ENCODE measurements at regions of chr12 and their contacts with region 1.

Region 1: DNA sequence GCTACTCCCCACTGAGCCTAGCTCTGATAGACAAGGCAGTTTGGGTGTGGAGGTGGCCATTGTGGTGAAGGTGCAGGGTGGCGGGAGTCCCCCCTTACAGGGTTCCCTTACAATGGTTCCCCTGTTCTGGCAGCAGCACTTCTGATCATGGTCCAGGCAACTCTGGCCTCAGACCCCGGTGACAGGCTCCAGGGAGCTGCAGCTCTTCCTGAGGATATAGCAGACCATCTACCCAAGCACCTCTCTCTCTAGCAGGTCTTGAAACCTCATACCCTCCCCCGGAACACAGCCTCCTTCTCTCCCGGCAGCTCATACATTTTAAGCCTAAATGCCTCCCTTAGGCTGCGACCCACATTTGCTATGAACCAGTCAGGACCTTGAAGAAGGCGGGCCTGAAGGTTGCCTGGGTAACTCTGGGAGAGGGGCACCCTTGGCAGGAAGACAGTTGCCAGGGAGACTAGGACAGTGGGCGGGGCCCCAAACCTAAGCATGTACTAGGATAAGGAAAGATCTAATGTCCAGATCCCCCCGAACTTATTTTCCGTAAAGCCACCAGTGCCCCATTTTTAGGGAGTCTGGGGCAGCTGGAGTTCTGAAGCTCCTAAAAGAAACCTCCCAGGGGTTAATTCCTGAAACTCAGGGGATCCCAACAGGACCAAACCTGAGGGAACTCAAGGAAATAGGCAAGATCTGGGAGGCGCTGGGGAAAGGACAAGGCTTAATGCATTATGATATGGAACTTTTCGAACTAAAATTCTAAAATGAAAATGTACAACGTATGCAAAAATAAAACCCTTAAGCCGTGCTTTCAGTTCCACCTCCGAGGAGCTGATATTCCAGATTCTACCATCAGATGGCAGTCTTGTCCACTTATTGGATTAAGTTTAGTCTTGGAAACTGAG is 4.5 kb upstream of the GDF11 start:
- DNase-seq: peak; percentile 57 to 85 (median 58)
- ATAC-seq: peak; percentile 74
- H3K4me3 ChIP-seq: peak overlapping the region; percentile 35
- H3K27ac ChIP-seq: peak overlapping the region; percentile 27
- H3K4me1 ChIP-seq: peaks cover 21 to 24% of the 10 kb centered on the region in 2 experiments
- H3K27me3 ChIP-seq: no peaks in the 10 kb centered on the region
- CTCF ChIP-seq: peak; percentile 66 to 91 (median 85)
- EP300 ChIP-seq: no peak
- POLR2A ChIP-seq: no peak
- RAD21 ChIP-seq: peak; percentile 94

Region 2: GRCh38 chr12:55188974-55189556 is 549.3 kb before region 1 on chr12:
- CTCF ChIA-PET with region 1: interaction called, 5 read pairs
- POLR2A ChIA-PET with region 1: no interaction called
- in situ Hi-C with region 1: no loop called
- intact Hi-C with region 1: loop called (anchors 5 kb)
- DNase-seq: peak; percentile 55 to 86 (median 62)
- ATAC-seq: peak; percentile 93
- H3K4me3 ChIP-seq: no peak overlapping the region
- H3K27ac ChIP-seq: no peak overlapping the region
- H3K4me1 ChIP-seq: no peaks in the 10 kb centered on the region
- H3K27me3 ChIP-seq: no peaks in the 10 kb centered on the region; a peak in 1 of 5 replicates
- CTCF ChIP-seq: peak; percentile 50 to 87 (median 58); a peak in 5 of 6 replicates
- EP300 ChIP-seq: no peak
- POLR2A ChIP-seq: no peak
- RAD21 ChIP-seq: peak; percentile 96 to 97

Region 3: GRCh38 chr12:55554296-55554695 is 184.1 kb before region 1 on chr12:
- CTCF ChIA-PET with region 1: no interaction called
- POLR2A ChIA-PET with region 1: no interaction called
- in situ Hi-C with region 1: no loop called
- intact Hi-C with region 1: no loop called
- DNase-seq: no peak
- ATAC-seq: no peak
- H3K4me3 ChIP-seq: no peak overlapping the region
- H3K27ac ChIP-seq: no peak overlapping the region
- H3K4me1 ChIP-seq: no peaks in the 10 kb centered on the region
- H3K27me3 ChIP-seq: no peaks in the 10 kb centered on the region
- CTCF ChIP-seq: no peak
- EP300 ChIP-seq: no peak
- POLR2A ChIP-seq: no peak
- RAD21 ChIP-seq: no peak

Region 4: DNA sequence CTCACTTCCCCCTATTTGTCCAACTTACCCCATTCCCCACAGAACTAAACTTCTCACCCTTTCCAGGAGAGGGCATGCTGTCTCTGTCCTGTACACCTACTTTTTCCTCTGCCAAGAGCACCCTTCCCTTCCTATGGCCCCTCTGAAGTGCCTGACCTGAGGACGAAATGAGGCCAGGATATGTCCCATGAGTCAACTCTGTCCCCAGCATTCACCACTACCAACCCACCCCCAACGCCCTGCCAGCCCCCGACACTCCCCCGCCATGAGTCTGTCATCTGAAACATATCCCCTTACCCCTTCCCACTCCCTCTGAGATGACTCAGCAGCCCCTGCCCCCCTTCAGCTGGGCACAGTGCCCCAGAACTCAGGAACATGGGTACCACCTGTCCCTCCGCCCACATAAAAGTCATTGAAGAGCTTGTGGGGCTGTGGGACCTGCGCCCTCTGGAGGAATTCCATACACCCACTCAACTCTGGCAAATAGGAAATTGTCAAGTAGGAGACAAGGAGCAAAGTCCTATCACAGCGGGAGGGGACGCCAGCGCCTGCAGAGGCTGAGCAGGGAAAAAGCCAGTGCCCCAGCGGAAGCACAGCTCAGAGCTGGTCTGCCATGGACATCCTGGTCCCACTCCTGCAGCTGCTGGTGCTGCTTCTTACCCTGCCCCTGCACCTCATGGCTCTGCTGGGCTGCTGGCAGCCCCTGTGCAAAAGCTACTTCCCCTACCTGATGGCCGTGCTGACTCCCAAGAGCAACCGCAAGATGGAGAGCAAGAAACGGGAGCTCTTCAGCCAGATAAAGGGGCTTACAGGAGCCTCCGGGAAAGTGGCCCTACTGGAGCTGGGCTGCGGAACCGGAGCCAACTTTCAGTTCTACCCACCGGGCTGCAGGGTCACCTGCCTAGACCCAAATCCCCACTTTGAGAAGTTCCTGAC is 57.0 kb before region 1 on chr12:
- CTCF ChIA-PET with region 1: interaction called, 3 read pairs
- POLR2A ChIA-PET with region 1: no interaction called
- in situ Hi-C with region 1: no loop called
- intact Hi-C with region 1: loop called (anchors 1 kb)
- DNase-seq: peak in 3 of 4 experiments; percentile 20 to 71 (median 56)
- ATAC-seq: peak; percentile 84
- H3K4me3 ChIP-seq: peak overlapping the region; percentile 29
- H3K27ac ChIP-seq: no peak overlapping the region; the same call in 2 of the 3 replicates
- H3K4me1 ChIP-seq: peaks cover 0 to 11% of the 10 kb centered on the region in 2 experiments; a peak in 2 of 5 replicates
- H3K27me3 ChIP-seq: peaks cover 29 to 50% of the 10 kb centered on the region in 2 experiments
- CTCF ChIP-seq: peak; percentile 55 to 80 (median 64)
- EP300 ChIP-seq: no peak
- POLR2A ChIP-seq: no peak
- RAD21 ChIP-seq: peak in 1 of 2 experiments; percentile 22; a peak in 3 of 4 replicates

Region 5: DNA sequence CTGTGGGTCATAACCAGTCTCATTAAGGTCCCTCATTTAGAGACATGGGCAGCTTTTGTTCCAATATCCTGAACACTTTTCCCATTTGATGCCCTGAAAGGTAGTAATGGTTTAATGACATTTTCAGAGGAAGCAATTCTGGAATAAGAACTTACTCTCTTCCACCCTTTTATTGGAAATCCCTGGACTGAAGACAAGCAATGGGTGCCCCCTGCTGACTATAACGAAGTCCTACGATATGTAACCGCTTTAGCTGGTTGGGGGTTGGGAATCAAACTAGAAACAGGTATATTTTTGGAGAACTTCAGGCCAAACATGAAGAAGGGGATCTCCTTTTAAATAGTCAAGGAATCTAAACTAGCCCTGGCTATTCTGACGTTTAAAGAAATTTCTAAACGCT is 58.7 kb after region 1 on chr12:
- CTCF ChIA-PET with region 1: interaction called, 14 read pairs
- POLR2A ChIA-PET with region 1: no interaction called
- in situ Hi-C with region 1: no loop called
- intact Hi-C with region 1: loop called (anchors 1 kb)
- DNase-seq: peak; percentile 31 to 61 (median 48)
- ATAC-seq: peak; percentile 90
- H3K4me3 ChIP-seq: no peak overlapping the region
- H3K27ac ChIP-seq: no peak overlapping the region
- H3K4me1 ChIP-seq: no peaks in the 10 kb centered on the region
- H3K27me3 ChIP-seq: no peaks in the 10 kb centered on the region
- CTCF ChIP-seq: peak; percentile 48 to 71 (median 54)
- EP300 ChIP-seq: no peak
- POLR2A ChIP-seq: no peak
- RAD21 ChIP-seq: peak; percentile 59 to 66

Region 6: DNA sequence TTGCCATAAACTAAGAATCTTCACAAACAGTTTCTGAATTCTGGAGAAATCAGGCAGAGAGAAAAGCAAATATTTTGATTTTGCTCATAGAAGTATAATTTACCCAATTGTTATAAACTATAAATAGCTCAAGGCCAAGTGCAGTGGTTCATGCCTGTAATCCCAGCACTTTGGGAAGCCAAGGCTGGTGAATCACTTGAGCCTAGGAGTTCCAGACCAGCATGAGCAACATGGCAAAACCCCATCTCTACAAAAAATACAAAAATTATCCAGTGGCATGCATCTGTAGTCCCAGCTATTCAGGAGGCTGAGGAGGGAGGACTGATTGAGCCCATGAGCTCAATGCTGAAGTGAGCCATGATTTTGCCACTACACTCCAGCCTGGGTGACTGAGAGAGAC is 123.9 kb after region 1 on chr12:
- CTCF ChIA-PET with region 1: no interaction called
- POLR2A ChIA-PET with region 1: no interaction called
- in situ Hi-C with region 1: no loop called
- intact Hi-C with region 1: no loop called
- DNase-seq: no peak
- ATAC-seq: no peak
- H3K4me3 ChIP-seq: no peak overlapping the region
- H3K27ac ChIP-seq: no peak overlapping the region
- H3K4me1 ChIP-seq: no peaks in the 10 kb centered on the region; a peak in 1 of 5 replicates
- H3K27me3 ChIP-seq: no peaks in the 10 kb centered on the region
- CTCF ChIP-seq: no peak
- EP300 ChIP-seq: no peak
- POLR2A ChIP-seq: no peak
- RAD21 ChIP-seq: no peak

Region 7: DNA sequence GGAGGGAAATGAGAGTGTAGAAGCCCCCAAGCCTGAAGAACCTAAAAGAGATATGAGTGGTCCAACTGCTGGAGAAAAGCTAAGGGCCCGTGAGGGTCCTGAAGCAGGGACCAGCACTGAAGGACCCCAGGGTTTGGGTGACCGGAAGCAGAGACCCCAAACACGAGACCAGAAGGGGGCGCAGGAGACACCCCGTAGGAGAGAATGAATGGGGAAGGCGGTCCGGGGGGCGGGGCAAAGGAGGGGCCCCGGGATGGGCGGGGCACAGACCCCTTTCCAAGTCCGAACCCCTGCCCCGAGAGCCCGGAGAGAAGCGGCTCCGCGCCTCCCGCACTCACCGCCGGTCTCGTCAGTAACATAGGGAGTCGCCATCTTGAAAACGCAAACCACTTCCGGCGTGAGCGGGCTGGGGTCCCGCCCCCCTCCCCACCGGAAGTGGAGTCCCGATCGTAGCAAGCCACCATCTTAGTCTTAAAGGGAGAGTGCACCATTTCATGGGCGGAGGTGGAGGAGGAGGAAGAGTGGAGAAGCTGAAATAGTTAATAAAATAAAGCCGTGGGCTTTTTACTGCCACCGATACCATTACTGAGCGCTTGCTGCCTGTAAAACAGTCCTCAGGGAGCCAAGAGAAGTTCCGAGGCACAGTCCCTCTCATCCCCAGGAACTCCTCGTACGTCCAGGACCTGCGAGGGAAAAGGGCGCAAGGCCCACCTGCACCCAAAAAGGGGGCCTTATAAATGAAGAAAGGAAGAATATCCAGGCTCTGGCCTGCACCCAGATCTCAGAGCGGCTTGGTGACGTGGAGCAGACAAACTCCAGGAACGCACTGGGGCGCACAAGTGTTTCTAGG is 188.6 kb after region 1 on chr12:
- CTCF ChIA-PET with region 1: no interaction called
- POLR2A ChIA-PET with region 1: interaction called, 3 read pairs
- in situ Hi-C with region 1: no loop called
- intact Hi-C with region 1: loop called (anchors 2 kb)
- DNase-seq: peak; percentile 96 to 98 (median 97)
- ATAC-seq: peak; percentile 81
- H3K4me3 ChIP-seq: peak overlapping the region; percentile 69
- H3K27ac ChIP-seq: peak overlapping the region; percentile 95
- H3K4me1 ChIP-seq: peaks cover 21 to 27% of the 10 kb centered on the region in 2 experiments; a peak in 4 of 5 replicates
- H3K27me3 ChIP-seq: no peaks in the 10 kb centered on the region
- CTCF ChIP-seq: peak; percentile 68 to 77 (median 68)
- EP300 ChIP-seq: no peak; the same call in 1 of the 2 replicates
- POLR2A ChIP-seq: no peak; the same call in 1 of the 2 replicates
- RAD21 ChIP-seq: peak in 1 of 2 experiments; percentile 30; a peak in 2 of 4 replicates

Region 8: DNA sequence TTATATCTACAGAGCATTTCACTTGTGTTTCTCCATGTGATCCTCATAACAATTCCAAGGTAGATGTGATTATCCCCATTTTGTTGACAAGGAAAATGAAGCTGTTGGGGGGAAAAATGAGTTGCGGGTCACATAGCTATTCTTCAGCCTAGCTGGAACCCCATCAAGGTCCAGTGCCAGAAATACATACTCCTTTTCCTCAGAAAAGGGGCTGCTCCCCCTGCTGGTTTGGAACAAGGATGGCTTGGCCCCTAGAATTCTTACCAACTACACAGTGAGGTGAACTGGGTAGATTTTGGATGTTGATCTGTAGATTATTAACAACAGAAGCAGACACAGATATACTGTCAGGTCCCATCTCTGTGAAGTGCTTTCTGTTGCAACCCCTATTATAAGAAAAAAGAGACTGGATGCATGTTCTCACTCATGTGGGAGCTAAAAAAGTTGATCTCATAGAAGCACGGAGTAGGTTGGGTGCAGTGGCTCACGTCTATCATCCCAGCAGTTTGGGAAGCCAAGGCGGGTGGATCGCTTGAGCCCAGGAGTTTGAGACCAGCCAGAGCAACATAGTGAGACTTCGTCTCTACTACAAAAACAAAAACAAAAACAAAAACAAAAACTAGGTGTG is 291.4 kb after region 1 on chr12:
- CTCF ChIA-PET with region 1: interaction called, 4 read pairs
- POLR2A ChIA-PET with region 1: no interaction called
- in situ Hi-C with region 1: loop called (anchors 5 kb)
- intact Hi-C with region 1: no loop called
- DNase-seq: peak; percentile 56 to 75 (median 65)
- ATAC-seq: peak; percentile 97
- H3K4me3 ChIP-seq: no peak overlapping the region
- H3K27ac ChIP-seq: no peak overlapping the region
- H3K4me1 ChIP-seq: peaks cover 0 to 6% of the 10 kb centered on the region in 2 experiments; a peak in 1 of 5 replicates
- H3K27me3 ChIP-seq: no peaks in the 10 kb centered on the region
- CTCF ChIP-seq: peak; percentile 71 to 74 (median 73)
- EP300 ChIP-seq: no peak
- POLR2A ChIP-seq: no peak
- RAD21 ChIP-seq: peak; percentile 77 to 87

Region 9: GRCh38 chr12:56098592-56098991 is 360.2 kb after region 1 on chr12:
- CTCF ChIA-PET with region 1: no interaction called
- POLR2A ChIA-PET with region 1: no interaction called
- in situ Hi-C with region 1: no loop called
- intact Hi-C with region 1: no loop called
- DNase-seq: peak in 1 of 4 experiments; percentile 9
- ATAC-seq: no peak
- H3K4me3 ChIP-seq: no peak overlapping the region
- H3K27ac ChIP-seq: no peak overlapping the region
- H3K4me1 ChIP-seq: peaks cover 3 to 8% of the 10 kb centered on the region in 2 experiments; a peak in 4 of 5 replicates
- H3K27me3 ChIP-seq: peaks cover 0 to 6% of the 10 kb centered on the region in 2 experiments; a peak in 1 of 5 replicates
- CTCF ChIP-seq: no peak
- EP300 ChIP-seq: no peak
- POLR2A ChIP-seq: no peak
- RAD21 ChIP-seq: no peak

Region 10: GRCh38 chr12:56198836-56199235 is 460.5 kb after region 1 on chr12:
- CTCF ChIA-PET with region 1: no interaction called
- POLR2A ChIA-PET with region 1: no interaction called
- in situ Hi-C with region 1: no loop called
- intact Hi-C with region 1: no loop called
- DNase-seq: no peak
- ATAC-seq: no peak
- H3K4me3 ChIP-seq: no peak overlapping the region
- H3K27ac ChIP-seq: no peak overlapping the region
- H3K4me1 ChIP-seq: peaks cover 0 to 10% of the 10 kb centered on the region in 2 experiments; a peak in 3 of 5 replicates
- H3K27me3 ChIP-seq: no peaks in the 10 kb centered on the region
- CTCF ChIP-seq: no peak
- EP300 ChIP-seq: no peak
- POLR2A ChIP-seq: no peak
- RAD21 ChIP-seq: no peak

Measured in K562 (cell line).